ENCODE measurements at regions of chr14 and their contacts with region 1.

Region 1: DNA sequence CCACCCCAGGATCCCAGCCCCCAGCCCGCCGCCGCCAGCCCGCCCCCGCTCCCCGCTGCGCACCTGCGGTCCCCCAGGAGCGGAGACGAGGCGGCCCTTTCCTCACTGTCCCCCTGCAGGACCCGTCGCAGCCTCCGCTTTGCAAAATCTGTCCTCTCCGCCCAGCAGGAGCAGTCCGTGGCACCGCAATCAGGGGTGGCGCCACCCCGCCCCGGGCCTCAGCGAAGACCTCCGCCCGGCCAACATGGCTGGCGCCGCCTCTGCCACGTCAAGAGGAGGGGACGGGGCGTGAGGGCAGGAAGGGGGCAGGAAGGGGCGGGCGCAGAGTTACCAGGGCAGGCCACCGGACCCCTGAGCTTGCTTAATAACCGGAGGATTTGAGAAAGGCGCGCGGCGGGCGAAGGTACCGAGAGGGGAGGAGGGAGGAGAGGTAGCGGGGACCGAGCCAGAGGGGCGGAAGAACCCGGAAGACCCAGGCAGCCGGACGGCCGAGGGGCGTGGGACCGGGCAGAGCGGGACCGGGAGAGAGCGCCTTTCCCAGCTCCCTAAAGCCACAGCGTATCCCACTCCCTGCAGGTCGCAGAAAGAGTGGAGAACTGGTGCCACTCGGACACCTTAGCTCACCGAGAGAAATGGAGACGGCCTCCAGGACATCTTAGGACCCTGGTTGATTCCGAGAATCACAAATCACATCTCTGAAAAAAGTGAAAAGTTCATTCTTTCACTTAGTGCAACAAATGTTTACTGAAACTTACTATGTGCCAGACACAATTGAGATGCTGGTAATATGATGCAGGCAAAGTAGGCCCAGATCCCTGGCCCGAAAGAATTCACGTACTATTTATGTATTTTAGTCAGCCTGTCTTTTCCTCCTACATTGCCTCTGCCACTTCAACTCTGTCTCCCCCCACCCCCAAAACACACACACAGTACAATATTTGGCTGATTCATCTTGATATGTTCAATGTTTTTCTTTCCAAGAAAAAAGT is at the start of gene SEC23A:
- DNase-seq: peak; percentile 87
- H3K4me3 Mint-ChIP-seq: peak within 1 kb of the TSS; percentile 93
- H3K27ac Mint-ChIP-seq: peak within 1 kb of the TSS; percentile 90
- H3K4me1 Mint-ChIP-seq: peaks cover 17% of the 10 kb centered on the region
- H3K27me3 Mint-ChIP-seq: no peaks in the 10 kb centered on the region
- CTCF ChIP-seq: no peak
- total RNA-seq, gene SEC23A: 37.5 and 48.0 TPM in 2 replicates

Region 2: DNA sequence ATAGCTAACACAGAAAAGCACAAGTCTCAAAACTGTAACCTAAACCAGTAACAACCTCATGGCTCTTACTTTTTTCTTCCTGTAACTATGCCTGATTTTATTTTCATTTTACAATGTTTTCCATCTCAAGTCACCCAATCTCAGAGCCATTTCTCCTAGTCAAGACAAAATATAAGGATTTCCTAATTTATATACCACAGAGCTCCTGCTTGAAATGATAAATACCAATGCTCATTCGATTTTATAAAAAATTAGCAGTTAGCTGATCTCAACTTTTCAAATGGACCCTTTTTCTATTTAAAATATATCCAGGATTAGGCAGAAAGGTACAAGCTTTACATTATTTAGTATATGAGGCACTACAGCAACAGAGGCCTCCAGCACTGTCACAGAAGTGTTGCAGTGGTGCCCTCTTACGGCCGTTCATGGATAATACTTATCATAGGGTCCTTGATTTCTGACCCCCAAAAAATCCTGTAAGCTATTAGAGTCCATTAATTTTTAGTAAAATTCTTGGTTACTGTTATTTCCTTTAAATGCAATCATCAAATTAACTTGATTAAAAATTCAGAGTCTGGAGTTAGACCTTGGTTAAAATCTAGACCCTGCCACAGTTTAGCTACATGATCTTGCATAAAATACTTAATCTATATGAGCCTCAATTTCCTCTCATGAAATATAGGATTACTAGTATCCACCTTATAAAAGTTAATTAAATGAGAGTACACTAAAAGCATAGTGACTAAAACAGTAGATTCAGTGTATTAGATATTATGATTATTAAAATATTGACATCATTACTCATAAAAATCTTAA is 68.6 kb before region 1 on chr14:
- CTCF ChIA-PET with region 1: no interaction called
- intact Hi-C with region 1: no loop called
- DNase-seq: no peak
- H3K4me3 Mint-ChIP-seq: no peak overlapping the region
- H3K27ac Mint-ChIP-seq: no peak overlapping the region
- H3K4me1 Mint-ChIP-seq: no peaks in the 10 kb centered on the region
- H3K27me3 Mint-ChIP-seq: no peaks in the 10 kb centered on the region
- CTCF ChIP-seq: no peak

Region 3: DNA sequence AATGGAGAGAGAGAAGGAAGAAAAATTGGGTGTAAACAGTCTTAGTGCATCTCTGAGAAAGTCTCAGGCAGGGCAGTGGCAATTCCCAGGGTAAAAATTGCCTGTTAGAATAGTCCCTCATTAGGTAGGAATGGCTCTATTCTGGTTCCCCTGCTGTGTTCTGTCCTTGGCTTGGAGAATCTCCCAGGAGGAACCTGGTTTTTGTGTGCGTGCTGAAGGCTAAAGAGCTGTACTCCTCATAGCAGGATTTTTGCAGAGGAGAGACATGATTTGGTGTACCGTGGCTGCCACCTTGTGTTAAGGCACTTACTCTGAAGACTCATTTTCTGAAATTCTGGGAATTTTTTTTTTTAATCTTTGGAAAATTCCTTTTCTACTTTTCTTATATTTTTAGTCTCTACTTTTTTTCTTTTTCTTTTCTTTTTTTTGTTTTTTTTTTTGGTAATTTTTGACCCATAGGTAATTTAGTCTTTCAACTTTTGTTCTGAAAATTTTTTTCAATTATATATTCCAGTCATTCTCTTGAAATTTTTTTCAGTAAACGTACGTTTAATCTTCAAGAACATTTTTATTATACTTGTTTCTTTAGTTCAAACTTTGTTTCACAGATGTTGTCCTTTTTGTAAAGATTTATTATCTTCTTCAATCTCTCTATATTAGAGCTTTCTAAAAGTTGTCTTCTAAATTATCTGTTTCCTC is 265.1 kb after region 1 on chr14:
- CTCF ChIA-PET with region 1: interaction called, 3 read pairs
- intact Hi-C with region 1: loop called (anchors 1 kb)
- DNase-seq: peak; percentile 62
- H3K4me3 Mint-ChIP-seq: no peak overlapping the region
- H3K27ac Mint-ChIP-seq: no peak overlapping the region
- H3K4me1 Mint-ChIP-seq: peaks cover 9% of the 10 kb centered on the region
- H3K27me3 Mint-ChIP-seq: no peaks in the 10 kb centered on the region
- CTCF ChIP-seq: peak; percentile 58

Region 4: GRCh38 chr14:39432179-39432618 is 328.9 kb after region 1 on chr14 and contains the start of gene FBXO33:
- CTCF ChIA-PET with region 1: no interaction called
- intact Hi-C with region 1: loop called (anchors 5 kb)
- DNase-seq: peak; percentile 96
- H3K4me3 Mint-ChIP-seq: peak within 1 kb of the TSS; percentile 94
- H3K27ac Mint-ChIP-seq: peak within 1 kb of the TSS; percentile 100
- H3K4me1 Mint-ChIP-seq: peaks cover 18% of the 10 kb centered on the region
- H3K27me3 Mint-ChIP-seq: no peaks in the 10 kb centered on the region
- CTCF ChIP-seq: no peak
- total RNA-seq, gene FBXO33: 8.6 and 9.1 TPM in 2 replicates

Region 5: DNA sequence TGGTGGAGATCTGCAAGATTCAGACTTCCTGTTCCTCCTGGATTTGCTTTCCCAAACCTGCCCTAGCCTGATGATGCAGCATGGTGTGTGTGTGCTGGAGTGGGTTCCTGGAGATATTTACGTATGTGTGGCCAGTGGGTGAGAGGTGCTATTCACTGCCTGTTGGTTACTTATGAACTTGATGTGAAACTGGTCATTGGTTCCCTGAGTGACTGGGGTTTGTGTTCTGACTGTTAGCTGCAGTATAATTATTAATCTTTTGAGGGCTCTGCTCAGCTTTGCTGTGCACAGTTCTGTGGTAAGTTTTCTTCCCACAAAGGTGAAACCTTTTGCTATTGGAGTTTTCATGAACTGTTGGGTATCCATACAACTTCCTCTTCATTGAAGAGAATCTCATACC is 870.8 kb after region 1 on chr14:
- CTCF ChIA-PET with region 1: no interaction called
- intact Hi-C with region 1: no loop called
- DNase-seq: no peak
- H3K4me3 Mint-ChIP-seq: no peak overlapping the region
- H3K27ac Mint-ChIP-seq: no peak overlapping the region
- H3K4me1 Mint-ChIP-seq: no peaks in the 10 kb centered on the region
- H3K27me3 Mint-ChIP-seq: no peaks in the 10 kb centered on the region
- CTCF ChIP-seq: no peak

Measured in Calu3 (cell line).